ENCODE measurements at regions of chr14 and their contacts with region 1.

Region 1: DNA sequence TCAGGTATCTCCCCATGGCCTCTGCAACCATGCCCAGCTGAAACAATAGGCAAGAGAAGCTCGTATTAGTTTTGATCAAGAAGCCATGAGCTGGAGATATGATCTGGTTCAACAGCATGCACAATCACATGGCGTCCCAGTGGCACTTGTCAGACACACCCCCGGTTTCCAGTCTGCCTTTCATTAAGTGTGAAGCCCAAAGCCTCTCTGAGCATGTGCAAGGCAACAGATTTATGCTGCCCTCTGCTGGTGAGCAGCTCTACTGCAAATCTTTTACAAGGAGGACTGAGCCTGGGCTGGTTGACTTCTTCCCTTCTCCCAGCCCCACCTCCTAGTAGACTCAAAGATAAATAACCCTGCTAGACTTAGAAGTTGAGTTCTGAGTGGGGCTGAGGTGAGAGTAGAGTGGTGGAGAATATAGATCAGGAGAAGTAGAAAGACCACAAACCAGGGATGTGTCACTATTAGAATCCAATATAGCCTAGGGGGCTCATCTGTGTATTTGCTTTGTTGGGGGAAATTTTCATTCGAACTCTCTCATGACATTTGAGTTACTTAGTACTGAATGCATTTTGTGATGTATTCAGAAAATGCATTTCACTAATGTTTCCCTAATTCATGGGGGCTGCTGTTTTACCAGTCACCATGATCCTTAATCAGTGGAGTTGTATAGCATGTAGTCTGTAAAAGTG is 53.7 kb upstream of the MBIP start:
- DNase-seq: peak; percentile 87
- H3K4me3 ChIP-seq: no peak overlapping the region
- H3K27ac ChIP-seq: no peak overlapping the region
- H3K4me1 ChIP-seq: no peaks in the 10 kb centered on the region
- H3K27me3 ChIP-seq: no peaks in the 10 kb centered on the region
- CTCF ChIP-seq: peak; percentile 79

Region 2: DNA sequence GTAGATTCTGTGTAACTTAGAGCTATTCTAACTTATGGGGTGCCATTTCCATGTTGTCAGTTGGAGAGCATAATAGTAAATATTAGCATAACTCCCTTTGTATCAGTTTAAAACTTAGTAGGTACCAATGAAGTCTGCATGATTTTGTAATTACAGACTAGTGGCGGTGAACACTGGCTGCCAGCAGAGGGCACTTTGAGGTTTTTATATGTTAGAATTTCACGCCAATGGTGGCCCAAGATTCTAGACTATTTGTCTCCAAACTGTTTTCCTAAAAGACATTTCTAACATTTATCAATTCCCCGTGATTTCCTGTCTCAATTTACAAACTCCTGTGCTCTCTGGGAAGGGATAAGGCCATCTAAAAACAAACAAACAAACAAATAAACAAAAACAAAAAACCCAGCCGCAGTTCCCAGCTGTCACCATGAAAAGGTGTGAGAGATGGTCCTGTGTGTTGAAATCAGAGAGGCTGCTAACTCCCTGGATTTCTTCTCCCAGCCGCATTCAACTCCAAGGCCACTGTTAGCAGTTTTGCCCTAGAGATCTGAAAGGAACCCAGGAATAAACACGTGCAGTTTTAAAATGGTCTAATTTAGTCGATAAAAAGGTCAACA is 490.3 kb before region 1 on chr14:
- intact Hi-C with region 1: loop called (anchors 10 kb)
- DNase-seq: no peak
- H3K4me3 ChIP-seq: no peak overlapping the region
- H3K27ac ChIP-seq: no peak overlapping the region
- H3K4me1 ChIP-seq: no peaks in the 10 kb centered on the region
- H3K27me3 ChIP-seq: no peaks in the 10 kb centered on the region
- CTCF ChIP-seq: peak; percentile 40

Region 3: DNA sequence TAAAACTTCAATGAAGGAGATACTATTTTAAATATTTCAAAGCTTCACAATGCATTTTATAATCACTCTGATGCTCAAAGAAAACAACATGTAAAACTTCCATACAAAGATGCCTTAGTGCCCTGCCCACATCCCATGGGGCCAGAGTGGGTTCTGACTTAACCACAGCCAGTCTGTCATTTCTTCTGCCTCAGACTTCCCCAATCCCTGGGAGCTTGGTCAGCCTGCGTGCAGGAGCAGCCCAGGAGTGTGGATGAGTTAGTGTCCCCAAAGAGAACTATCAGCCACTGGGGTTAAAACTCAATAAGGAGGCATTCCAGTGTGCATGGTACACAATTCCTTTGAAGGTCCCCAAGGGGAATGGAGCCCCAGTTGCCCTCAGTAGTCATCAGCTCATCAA is 297.9 kb before region 1 on chr14:
- intact Hi-C with region 1: loop called (anchors 5 kb)
- DNase-seq: no peak
- H3K4me3 ChIP-seq: no peak overlapping the region
- H3K27ac ChIP-seq: no peak overlapping the region
- H3K4me1 ChIP-seq: no peaks in the 10 kb centered on the region
- H3K27me3 ChIP-seq: no peaks in the 10 kb centered on the region
- CTCF ChIP-seq: no peak

Region 4: GRCh38 chr14:36207500-36207899 is 166.6 kb before region 1 on chr14:
- intact Hi-C with region 1: loop called (anchors 2 kb)
- DNase-seq: no peak
- H3K4me3 ChIP-seq: no peak overlapping the region
- H3K27ac ChIP-seq: no peak overlapping the region
- H3K4me1 ChIP-seq: no peaks in the 10 kb centered on the region
- H3K27me3 ChIP-seq: no peaks in the 10 kb centered on the region
- CTCF ChIP-seq: peak; percentile 57

Region 5: DNA sequence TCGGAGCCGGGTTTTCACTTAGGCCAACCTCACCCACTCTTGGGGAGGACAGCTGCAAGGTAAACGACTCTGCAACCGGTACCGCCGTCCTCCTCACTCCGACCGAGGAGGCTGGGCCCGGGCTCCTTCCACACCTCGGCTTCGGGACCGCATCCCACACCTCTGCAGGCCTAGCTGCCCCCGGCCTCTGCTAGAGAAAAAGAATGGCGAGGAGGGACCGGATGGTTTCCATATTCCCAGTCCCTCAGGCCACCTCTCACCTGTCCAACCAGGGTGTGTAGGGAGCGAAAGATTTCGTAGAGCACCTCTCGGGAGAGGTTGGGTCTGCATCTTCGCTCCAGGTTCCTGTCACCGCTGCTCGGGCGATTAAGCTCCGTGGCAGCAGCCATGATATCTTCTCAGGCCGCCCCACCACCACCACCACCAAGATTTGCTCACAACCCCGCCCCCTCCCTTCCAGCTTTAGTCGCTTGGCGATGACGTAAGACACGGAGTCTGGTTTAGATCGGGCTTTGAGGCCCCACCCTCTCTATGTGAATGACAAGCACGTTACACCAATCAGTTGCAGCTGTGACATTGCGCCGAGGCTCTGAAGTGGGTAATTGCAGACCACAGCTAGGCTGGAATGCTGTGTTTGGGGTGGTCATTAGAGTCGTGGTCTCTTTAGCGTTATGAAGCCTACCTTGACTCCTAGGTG is 53.8 kb before region 1 on chr14 and contains the start of gene MBIP:
- intact Hi-C with region 1: no loop called
- DNase-seq: peak; percentile 96
- H3K4me3 ChIP-seq: peak within 1 kb of the TSS; percentile 75
- H3K27ac ChIP-seq: peak within 1 kb of the TSS; percentile 80
- H3K4me1 ChIP-seq: no peaks in the 10 kb centered on the region
- H3K27me3 ChIP-seq: no peaks in the 10 kb centered on the region
- CTCF ChIP-seq: no peak
- total RNA-seq, gene MBIP: 18.7 to 35.4 TPM

Measured in colonic mucosa (tissue), 4 donors.